Esophagus muscularis mucosa (tissue), 4 donors: ENCODE measurements at regions of chr4 and their contacts with region 1.

Region 1: GRCh38 chr4:175705407-175705806 is 106.7 kb downstream of the GPM6A start:
- DNase-seq: no peak
- H3K4me3 ChIP-seq: peak overlapping the region; percentile 7 to 35 (median 18)
- H3K27ac ChIP-seq: peak overlapping the region; percentile 64 to 73 (median 72)
- H3K4me1 ChIP-seq: peaks cover 0 to 27% (median 21%) of the 10 kb centered on the region in 4 donors
- H3K27me3 ChIP-seq: no peaks in the 10 kb centered on the region
- CTCF ChIP-seq: no peak
- EP300 ChIP-seq: no peak
- POLR2A ChIP-seq: no peak

Region 2: GRCh38 chr4:175671491-175671934 is 33.9 kb before region 1 on chr4:
- intact Hi-C with region 1: no loop called
- DNase-seq: no peak
- H3K4me3 ChIP-seq: peak overlapping the region; percentile 35 to 57 (median 44)
- H3K27ac ChIP-seq: peak overlapping the region in 1 of 4 donors; percentile 11
- H3K4me1 ChIP-seq: peaks cover 0 to 10% (median 6%) of the 10 kb centered on the region in 4 donors
- H3K27me3 ChIP-seq: no peaks in the 10 kb centered on the region
- CTCF ChIP-seq: no peak
- EP300 ChIP-seq: no peak
- POLR2A ChIP-seq: no peak

Region 3: DNA sequence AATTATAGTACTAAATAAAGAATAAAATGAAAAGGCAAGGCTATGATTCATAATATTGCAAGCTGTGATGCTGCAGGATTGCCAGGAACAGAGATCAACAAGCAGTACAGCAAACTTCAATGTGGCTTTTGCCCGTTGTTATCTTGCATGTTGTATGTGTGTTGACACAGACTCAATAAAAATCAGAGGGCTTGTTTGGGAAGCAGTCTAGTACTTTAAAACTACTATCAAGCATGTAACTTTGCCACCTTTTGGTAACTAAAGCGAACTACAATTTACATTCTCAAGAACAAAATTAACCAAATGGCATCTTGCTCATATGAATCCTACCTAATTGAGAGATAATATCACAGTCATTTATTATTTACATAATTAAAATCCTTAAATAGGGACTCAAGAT is 186.4 kb after region 1 on chr4:
- intact Hi-C with region 1: loop called (anchors 10 kb)
- DNase-seq: no peak
- H3K4me3 ChIP-seq: no peak overlapping the region
- H3K27ac ChIP-seq: peak overlapping the region in 2 of 4 donors; percentile 8 to 10
- H3K4me1 ChIP-seq: peaks cover 0 to 16% (median 6%) of the 10 kb centered on the region in 4 donors
- H3K27me3 ChIP-seq: no peaks in the 10 kb centered on the region
- CTCF ChIP-seq: peak; percentile 23 to 44 (median 29)
- EP300 ChIP-seq: no peak
- POLR2A ChIP-seq: no peak

Region 4: GRCh38 chr4:176031922-176032321 is 326.5 kb after region 1 on chr4:
- intact Hi-C with region 1: no loop called
- DNase-seq: no peak
- H3K4me3 ChIP-seq: no peak overlapping the region
- H3K27ac ChIP-seq: no peak overlapping the region
- H3K4me1 ChIP-seq: peaks cover 0 to 15% (median 10%) of the 10 kb centered on the region in 4 donors
- H3K27me3 ChIP-seq: no peaks in the 10 kb centered on the region
- CTCF ChIP-seq: no peak
- EP300 ChIP-seq: no peak
- POLR2A ChIP-seq: no peak